ENCODE measurements at regions of chr12 and their contacts with region 1.

Region 1: DNA sequence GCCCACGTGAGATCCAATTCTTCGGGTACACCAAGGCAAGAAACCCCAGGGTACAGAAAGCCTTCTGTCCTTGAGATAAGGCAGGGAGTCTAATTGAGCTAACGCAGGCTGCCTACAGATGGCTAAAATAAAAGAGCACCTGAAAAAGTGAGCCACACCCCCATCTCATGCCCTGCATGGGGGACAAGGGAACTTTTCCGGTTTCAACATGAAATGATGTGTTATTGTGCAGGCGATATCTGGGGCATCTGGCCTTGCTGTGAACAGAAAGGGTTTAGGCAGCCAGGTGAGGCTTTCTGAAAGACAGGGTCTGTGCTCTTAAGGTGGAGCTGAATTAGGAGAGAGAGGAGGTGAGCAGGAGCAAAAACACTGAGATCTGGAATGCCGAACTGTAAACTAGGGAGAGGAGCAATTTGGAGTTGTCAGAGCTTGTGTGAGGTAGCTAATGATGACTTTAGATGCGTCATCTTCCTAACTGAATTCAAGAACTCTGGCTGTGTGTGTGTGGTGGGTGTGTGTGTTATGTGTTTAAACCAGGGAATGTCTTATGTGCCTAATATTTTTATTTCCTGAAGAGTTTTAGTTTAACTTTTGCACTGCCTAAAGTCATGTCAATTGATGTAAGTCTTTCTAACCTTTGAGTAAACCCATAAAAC is 20.1 kb upstream of the LDHB start:
- DNase-seq: no peak
- H3K4me3 ChIP-seq: no peak overlapping the region
- H3K27ac ChIP-seq: no peak overlapping the region
- H3K27me3 ChIP-seq: peaks cover 0 to 4% (median 0%) of the 10 kb centered on the region in 45 donors
- CTCF ChIP-seq: no peak

Region 2: DNA sequence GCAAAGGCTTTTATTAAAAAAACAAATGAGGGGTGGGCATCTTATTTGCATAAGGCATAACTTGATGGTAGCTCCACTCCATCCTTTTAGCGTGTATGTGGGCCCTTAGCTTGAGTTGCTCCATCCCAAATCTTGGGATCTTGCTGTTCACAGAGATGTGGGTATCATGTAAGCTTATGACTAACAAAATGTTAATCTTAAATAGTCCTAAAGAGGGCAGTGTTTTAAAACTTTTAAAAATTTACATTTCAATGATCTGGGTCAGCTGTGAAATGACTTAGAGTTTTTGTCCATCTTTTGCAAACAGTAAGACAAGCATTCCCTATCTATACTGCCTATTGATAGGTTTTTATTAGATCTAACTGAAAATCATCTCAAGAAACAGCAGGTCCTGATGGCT is 429.1 kb before region 1 on chr12:
- intact Hi-C with region 1: loop called in 1 of 2 experiments (anchors 10 kb)
- DNase-seq: no peak
- H3K4me3 ChIP-seq: no peak overlapping the region
- H3K27ac ChIP-seq: no peak overlapping the region
- H3K27me3 ChIP-seq: no peaks in the 10 kb centered on the region
- CTCF ChIP-seq: peak in 52 of 56 donors; percentile 11 to 69 (median 46)

Region 3: DNA sequence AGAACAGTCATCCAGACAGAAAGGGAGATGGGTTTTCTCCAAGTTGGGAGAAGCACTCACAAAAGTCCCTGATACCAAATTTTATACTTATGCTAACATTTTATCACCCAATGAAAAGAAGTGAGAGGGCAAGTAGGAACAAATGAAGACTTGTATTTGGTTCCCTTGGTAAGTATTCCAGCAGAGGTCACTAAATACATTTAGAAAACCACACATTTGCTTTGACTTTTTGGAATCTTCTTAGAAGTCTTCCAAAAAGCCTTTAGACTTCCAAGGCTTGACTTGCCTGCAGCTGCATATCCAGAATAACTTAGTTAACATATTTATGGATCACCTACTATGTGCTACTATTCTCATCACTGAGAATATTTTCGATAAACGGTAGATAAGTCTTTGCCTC is 70.0 kb before region 1 on chr12:
- intact Hi-C with region 1: loop called (anchors 2 to 10 kb)
- DNase-seq: no peak
- H3K4me3 ChIP-seq: no peak overlapping the region
- H3K27ac ChIP-seq: no peak overlapping the region
- H3K27me3 ChIP-seq: no peaks in the 10 kb centered on the region
- CTCF ChIP-seq: peak in 53 of 56 donors; percentile 17 to 75 (median 48)